OCI-LY7 (cell line): ENCODE measurements at regions of chr3 and their contacts with region 1.

Region 1: DNA sequence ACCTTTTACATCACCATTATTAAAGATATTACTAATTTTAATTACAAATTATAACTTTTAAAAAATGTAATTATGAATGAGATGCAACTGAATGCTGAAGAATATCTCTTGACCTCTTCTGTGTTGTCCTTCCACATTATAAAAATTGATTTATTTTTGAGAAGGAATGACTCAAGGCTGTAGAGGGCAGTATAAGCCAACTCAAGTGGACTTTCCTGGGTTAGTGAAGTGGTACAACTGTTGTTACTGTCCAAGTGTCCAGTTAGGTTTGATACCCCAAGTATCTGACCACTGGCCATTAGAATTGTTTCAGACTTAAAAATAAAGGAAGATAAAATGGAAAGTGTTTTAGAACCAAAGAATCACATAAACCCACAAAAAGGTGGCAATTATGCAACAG is 51.9 kb downstream of the BBX start:
- DNase-seq: peak; percentile 36
- H3K4me3 ChIP-seq: no peak overlapping the region
- H3K27ac ChIP-seq: no peak overlapping the region
- H3K4me1 ChIP-seq: no peaks in the 10 kb centered on the region
- CTCF ChIP-seq: peak; percentile 80

Region 2: DNA sequence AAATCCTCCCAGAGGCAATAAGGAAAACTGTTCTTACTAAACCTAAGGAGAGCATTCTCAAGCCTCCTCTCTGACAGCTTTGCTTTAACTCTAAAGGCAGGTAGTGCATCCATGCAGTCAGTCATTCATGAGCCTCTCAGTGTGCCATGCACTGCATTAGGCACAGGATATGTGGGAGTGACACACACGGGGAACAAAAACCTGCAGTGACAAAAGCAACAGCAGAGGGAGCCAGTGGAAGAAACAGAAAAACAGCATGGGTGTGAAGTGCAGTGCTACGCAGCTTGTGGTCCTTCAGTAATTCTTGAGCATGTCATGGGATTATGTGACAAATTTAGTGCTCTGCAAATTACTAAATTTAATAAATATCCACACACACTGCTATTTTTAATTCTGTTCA is 178.8 kb after region 1 on chr3:
- CTCF ChIA-PET with region 1: no interaction called
- POLR2A ChIA-PET with region 1: no interaction called
- intact Hi-C with region 1: loop called (anchors 10 kb)
- DNase-seq: peak; percentile 35
- H3K4me3 ChIP-seq: no peak overlapping the region
- H3K27ac ChIP-seq: no peak overlapping the region
- H3K4me1 ChIP-seq: no peaks in the 10 kb centered on the region
- CTCF ChIP-seq: peak; percentile 63